ENCODE measurements at regions of chr14 and their contacts with region 1.

Region 1: GRCh38 chr14:23953464-23954278 is at the start of gene DHRS4:
- DNase-seq: peak; percentile 89 to 94
- ATAC-seq: peak; percentile 99
- H3K4me3 ChIP-seq: peak within 1 kb of the TSS; percentile 59 to 73
- H3K27ac ChIP-seq: peak within 1 kb of the TSS in 1 of 2 donors; percentile 82
- H3K4me1 ChIP-seq: no peaks in the 10 kb centered on the region
- H3K27me3 ChIP-seq: no peaks in the 10 kb centered on the region
- total RNA-seq, gene DHRS4: 17.8 to 21.2 TPM

Region 2: DNA sequence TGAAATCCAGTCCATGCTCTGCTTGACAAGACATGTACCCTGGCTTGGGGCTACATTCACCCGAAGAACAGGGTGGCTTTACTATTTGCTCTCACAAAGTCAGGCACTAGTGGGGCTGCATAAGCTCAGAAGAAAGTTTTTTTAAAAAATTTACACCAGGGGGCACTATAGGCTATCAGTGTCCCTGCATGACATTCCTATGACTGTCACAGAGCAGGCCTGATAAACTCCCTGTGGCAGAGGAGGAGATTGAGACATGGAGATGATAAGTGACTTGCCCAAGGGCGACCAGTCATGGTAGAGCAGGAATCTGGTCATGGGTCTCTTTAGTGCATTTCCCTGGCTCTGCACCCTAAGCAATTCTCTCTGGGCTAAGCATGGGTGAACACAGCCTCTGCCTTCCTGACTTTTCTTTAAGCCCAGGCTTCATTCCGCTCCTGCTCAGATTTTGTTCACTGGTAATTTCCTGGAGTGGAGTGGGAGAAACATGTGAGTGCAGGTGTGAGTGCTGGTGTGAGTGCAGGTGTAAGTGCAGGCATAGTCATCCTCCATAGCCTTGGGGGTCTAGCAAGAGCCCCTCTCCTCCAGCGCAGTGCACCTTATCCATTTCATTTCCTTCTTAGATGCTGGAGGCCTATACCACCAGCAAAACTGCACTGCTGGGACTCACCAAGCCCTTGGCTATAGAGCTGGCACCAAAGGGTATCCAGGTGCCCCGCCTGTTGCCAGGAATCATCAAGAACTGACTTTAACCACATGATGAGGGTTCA is 225.9 kb before region 1 on chr14:
- intact Hi-C with region 1: loop called in 1 of 2 experiments (anchors 5 kb)
- DNase-seq: no peak
- ATAC-seq: no peak
- H3K4me3 ChIP-seq: no peak overlapping the region
- H3K27ac ChIP-seq: no peak overlapping the region
- H3K4me1 ChIP-seq: no peaks in the 10 kb centered on the region
- H3K27me3 ChIP-seq: no peaks in the 10 kb centered on the region

Region 3: DNA sequence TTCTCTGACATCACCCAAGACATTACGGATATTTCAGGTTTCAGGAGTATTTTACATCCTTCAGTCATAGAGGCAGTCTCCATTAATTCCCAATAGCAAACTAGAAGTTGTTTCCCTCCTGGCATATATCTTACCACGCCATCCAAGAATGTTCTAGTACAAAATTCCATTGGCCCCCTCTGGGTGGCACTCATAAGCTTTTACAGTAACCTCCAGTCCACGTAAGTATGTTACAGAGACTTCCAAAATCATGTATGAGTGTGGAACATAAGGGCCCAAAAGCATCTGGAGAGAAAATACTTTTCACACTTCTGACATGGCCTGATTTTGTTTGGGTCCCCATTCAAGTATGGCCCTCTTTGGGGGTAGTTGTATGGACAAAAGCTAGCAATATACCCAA is 58.2 kb before region 1 on chr14:
- intact Hi-C with region 1: loop called in 1 of 2 experiments (anchors 10 kb)
- DNase-seq: no peak
- ATAC-seq: peak; percentile 59
- H3K4me3 ChIP-seq: no peak overlapping the region
- H3K27ac ChIP-seq: no peak overlapping the region
- H3K4me1 ChIP-seq: no peaks in the 10 kb centered on the region
- H3K27me3 ChIP-seq: no peaks in the 10 kb centered on the region

Region 4: DNA sequence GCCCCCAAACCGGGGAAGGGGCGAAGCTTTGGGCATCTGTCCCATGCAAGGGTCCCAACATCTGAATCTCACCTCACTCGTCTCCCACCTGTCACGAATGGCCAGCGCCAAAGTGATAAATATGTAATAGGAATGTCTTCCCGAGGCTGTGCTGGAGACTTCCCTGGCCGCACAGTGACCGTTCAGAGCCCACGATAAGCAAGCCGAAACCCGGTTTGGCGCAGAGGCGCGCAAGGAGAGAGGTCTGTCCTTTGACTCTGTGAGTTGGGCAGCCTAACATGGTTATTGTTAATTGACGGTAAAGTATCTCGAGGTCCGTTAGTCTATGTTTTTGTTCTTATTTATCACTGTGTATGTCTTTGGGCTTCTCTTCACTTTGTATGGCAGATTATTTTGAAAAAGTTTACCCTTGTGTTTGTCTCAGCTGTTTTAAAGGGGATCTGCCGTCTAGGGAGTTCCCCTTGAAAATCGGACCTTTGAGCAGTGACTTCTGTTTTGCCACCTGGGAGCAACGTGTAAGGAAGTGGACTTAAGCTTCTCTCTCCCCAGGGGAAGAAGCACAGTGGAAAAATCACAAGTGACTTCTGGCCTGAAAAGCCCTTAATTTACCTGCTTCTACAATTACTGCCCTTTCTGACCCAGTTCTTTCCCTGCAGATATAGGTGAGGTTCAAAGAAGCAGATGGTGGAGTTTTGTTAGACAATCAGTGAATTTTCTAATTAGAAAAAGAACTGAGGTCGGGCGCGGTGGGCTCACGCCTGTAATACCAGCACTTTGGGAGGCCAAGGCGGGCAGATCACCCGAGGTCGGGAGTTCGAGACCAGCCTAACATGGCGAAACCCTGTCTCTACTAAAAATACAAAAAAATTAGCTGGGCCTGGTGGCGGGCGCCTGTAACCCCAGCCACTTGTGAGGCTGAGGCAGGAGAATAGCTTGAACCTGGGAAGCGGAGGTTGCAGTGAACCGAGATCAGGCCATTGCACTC is 242.7 kb after region 1 on chr14:
- intact Hi-C with region 1: no loop called
- DNase-seq: no peak
- ATAC-seq: peak; percentile 43
- H3K4me3 ChIP-seq: peak overlapping the region; percentile 65 to 77
- H3K27ac ChIP-seq: peak overlapping the region in 1 of 2 donors; percentile 55
- H3K4me1 ChIP-seq: peaks cover 0 to 4% of the 10 kb centered on the region in 2 donors
- H3K27me3 ChIP-seq: no peaks in the 10 kb centered on the region

Measured in aorta (tissue), 5 donors.